ENCODE measurements at regions of chr3 and their contacts with region 1.

Region 1: DNA sequence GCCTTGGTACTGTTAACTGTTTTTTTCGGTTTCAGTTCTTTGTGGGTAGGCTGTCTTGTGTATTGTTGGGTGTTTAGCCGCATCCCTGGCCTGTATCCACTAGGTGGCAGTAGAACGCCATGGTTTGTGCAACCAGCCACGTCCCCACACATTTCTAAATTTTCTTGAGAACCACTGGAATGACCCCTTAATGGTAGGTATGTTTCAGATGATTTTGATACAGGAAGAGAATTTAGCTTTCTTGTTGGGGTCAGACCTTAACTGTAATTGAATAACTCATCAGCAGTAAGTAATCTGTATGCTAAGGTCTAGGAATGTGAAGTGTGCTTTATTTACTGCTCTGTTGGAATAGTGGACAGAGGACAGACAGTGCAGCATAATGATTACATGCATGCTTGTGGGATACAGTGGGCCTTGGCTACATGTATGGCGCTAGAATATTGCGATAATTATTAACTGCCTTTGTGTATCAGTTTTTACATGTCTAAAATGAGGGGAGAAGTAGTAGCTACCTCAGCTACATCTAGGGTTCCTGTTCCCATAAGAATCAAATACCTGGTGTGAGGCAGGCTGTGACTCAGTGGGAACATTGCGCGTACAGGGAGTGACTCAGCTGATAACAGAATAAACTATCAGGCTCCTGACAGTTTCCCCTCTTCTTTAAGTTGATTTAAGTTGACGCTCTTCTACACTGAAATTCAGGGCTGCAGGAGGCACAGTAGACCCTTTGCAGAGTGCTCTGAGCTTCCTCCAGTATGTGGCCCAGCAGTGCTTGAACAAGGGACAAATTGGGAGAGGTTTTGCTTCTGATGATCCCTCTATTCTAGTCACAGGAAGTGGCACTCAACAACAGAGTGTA is 25.0 kb upstream of the GPR171 start:
- DNase-seq: peak; percentile 47 to 90 (median 69)
- ATAC-seq: peak; percentile 79 to 87 (median 84)
- H3K4me3 ChIP-seq: no peak overlapping the region
- H3K4me3 Mint-ChIP-seq: no peak overlapping the region
- H3K27ac ChIP-seq: no peak overlapping the region
- H3K27ac Mint-ChIP-seq: peak overlapping the region; percentile 62 to 68
- H3K4me1 ChIP-seq: peaks cover 19 to 48% of the 10 kb centered on the region in 2 experiments
- H3K4me1 Mint-ChIP-seq: peaks cover 53 to 58% (median 54%) of the 10 kb centered on the region in 3 donors
- H3K27me3 ChIP-seq: no peaks in the 10 kb centered on the region
- H3K27me3 Mint-ChIP-seq: no peaks in the 10 kb centered on the region

Region 2: GRCh38 chr3:151035072-151035471 is 193.0 kb before region 1 on chr3:
- CTCF ChIA-PET with region 1: no interaction called
- POLR2A ChIA-PET with region 1: no interaction called
- DNase-seq: no peak
- ATAC-seq: no peak
- H3K4me3 ChIP-seq: no peak overlapping the region
- H3K4me3 Mint-ChIP-seq: no peak overlapping the region
- H3K27ac ChIP-seq: no peak overlapping the region
- H3K27ac Mint-ChIP-seq: no peak overlapping the region
- H3K4me1 ChIP-seq: no peaks in the 10 kb centered on the region
- H3K4me1 Mint-ChIP-seq: no peaks in the 10 kb centered on the region
- H3K27me3 ChIP-seq: no peaks in the 10 kb centered on the region
- H3K27me3 Mint-ChIP-seq: peaks cover 0 to 1% of the 10 kb centered on the region in 2 donors

Region 3: DNA sequence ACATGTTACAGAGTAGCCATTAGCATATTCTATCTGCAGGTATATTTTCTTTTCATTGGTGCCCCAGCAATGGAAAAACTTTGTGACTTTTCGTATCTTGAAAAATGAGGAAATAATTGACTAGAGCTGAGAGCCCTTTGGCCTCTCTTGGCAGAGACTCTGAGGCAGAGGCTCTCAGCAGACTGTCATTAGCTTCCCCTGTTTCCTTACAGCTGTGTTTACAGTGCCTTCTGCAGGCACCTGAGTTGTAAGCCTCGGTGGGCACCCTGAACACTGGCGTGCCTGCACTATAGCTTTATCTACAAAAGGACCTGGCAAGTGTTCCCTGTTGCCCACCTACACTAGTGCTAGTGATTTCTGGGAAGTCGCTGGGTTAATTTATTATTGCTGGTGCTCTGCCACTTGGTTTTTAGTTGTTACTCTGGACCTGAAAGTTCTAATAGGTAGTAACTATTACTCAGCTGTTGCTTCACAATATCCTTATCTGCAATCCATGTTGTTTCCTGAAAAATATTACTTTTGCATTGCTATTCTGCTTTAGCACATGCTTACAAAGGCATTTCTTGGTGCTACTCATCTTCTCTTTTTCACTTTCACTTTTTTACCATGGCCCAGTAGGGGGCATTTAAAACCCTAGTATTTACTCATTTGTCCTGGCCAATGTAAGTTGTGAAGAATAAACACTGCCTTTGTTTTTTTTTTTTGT is 17.2 kb before region 1 on chr3:
- CTCF ChIA-PET with region 1: interaction called, 5 to 14 read pairs
- POLR2A ChIA-PET with region 1: interaction called in 1 of 2 experiments, 6 read pairs
- DNase-seq: peak in 1 of 35 experiments; percentile 23
- ATAC-seq: peak; percentile 63 to 73 (median 65)
- H3K4me3 ChIP-seq: no peak overlapping the region
- H3K4me3 Mint-ChIP-seq: peak overlapping the region in 1 of 3 donors; percentile 40
- H3K27ac ChIP-seq: no peak overlapping the region
- H3K27ac Mint-ChIP-seq: peak overlapping the region; percentile 83 to 84
- H3K4me1 ChIP-seq: peaks cover 19 to 41% of the 10 kb centered on the region in 2 experiments
- H3K4me1 Mint-ChIP-seq: peaks cover 49 to 52% (median 50%) of the 10 kb centered on the region in 3 donors
- H3K27me3 ChIP-seq: no peaks in the 10 kb centered on the region
- H3K27me3 Mint-ChIP-seq: no peaks in the 10 kb centered on the region

Region 4: DNA sequence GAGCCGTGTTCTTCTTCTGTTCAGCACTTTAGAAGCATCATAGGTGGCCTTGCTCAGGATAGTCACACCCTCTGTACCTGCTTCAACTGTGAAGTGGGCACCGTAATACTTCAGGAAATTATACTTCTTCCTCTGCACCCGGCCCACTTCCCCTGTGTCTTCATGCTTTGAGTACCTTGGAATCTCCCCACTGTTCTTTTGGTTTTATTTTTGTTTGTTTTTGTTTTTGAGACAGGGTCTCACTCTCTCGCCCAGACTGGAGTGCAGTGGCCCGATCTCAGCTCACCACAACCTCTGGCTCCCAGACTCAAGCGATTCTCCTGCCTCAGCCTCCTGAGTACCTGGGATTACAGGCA is 48.6 kb after region 1 on chr3:
- CTCF ChIA-PET with region 1: interaction called, 14 to 23 read pairs
- POLR2A ChIA-PET with region 1: interaction called in 1 of 2 experiments, 3 read pairs
- DNase-seq: peak in 33 of 35 experiments; percentile 4 to 67 (median 40)
- ATAC-seq: peak; percentile 72 to 97 (median 74)
- H3K4me3 ChIP-seq: no peak overlapping the region
- H3K4me3 Mint-ChIP-seq: peak overlapping the region; percentile 39 to 60 (median 58)
- H3K27ac ChIP-seq: peak overlapping the region; percentile 66
- H3K27ac Mint-ChIP-seq: peak overlapping the region; percentile 92 to 94
- H3K4me1 ChIP-seq: peaks cover 14 to 37% of the 10 kb centered on the region in 2 experiments
- H3K4me1 Mint-ChIP-seq: peaks cover 40 to 46% (median 46%) of the 10 kb centered on the region in 3 donors
- H3K27me3 ChIP-seq: no peaks in the 10 kb centered on the region
- H3K27me3 Mint-ChIP-seq: no peaks in the 10 kb centered on the region

Region 5: GRCh38 chr3:151468284-151468917 is 240.4 kb after region 1 on chr3:
- CTCF ChIA-PET with region 1: interaction called, 3 to 10 read pairs
- POLR2A ChIA-PET with region 1: no interaction called
- DNase-seq: peak in 18 of 35 experiments; percentile 2 to 72 (median 15)
- ATAC-seq: peak in 1 of 4 experiments; percentile 47
- H3K4me3 ChIP-seq: no peak overlapping the region
- H3K4me3 Mint-ChIP-seq: no peak overlapping the region
- H3K27ac ChIP-seq: no peak overlapping the region
- H3K27ac Mint-ChIP-seq: no peak overlapping the region
- H3K4me1 ChIP-seq: no peaks in the 10 kb centered on the region
- H3K4me1 Mint-ChIP-seq: no peaks in the 10 kb centered on the region
- H3K27me3 ChIP-seq: peaks cover 0 to 2% of the 10 kb centered on the region in 2 experiments
- H3K27me3 Mint-ChIP-seq: peaks cover 0 to 21% of the 10 kb centered on the region in 2 donors